ENCODE measurements at regions of chr7 and their contacts with region 1.

Region 1: GRCh38 chr7:130063036-130063435 is 7.3 kb upstream of the KLHDC10 start:
- DNase-seq: peak; percentile 49 to 79 (median 66)
- ATAC-seq: peak; percentile 84
- H3K4me3 ChIP-seq: no peak overlapping the region
- H3K4me3 Mint-ChIP-seq: no peak overlapping the region
- H3K27ac ChIP-seq: no peak overlapping the region
- H3K27ac Mint-ChIP-seq: no peak overlapping the region
- H3K4me1 ChIP-seq: no peaks in the 10 kb centered on the region
- H3K4me1 Mint-ChIP-seq: no peaks in the 10 kb centered on the region
- H3K27me3 ChIP-seq: peaks cover 0 to 2% of the 10 kb centered on the region in 2 experiments
- H3K27me3 Mint-ChIP-seq: peaks cover 7% of the 10 kb centered on the region
- CTCF ChIP-seq: peak; percentile 82

Region 2: DNA sequence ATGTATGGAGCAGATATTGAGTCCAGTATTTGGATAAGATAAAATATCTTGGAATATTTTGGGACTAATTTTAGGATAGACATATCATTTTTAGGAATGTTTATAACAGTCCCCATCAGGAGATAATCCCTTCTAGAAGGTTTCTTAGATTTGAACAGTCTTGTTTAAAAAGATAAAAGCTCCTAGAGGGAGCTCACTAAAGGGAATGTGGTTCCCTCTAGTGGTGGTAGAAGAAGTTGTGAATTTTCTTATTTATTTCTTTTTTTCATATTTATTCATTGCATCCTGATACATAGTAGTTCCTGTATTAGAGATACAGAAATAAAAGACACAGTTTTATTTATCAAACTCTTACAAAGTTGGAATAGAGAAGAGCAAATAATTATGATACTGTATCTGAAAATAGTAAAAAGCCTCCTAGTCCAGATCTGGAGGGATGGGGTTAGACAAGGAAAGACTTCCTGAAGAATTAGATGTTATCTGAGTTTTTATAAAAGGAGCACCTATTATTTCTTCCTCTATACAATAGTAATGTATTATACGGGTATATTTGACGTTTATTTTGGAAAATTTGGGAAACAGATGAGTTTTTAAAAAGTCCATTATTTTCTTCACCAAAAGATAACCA is 695.5 kb after region 1 on chr7:
- CTCF ChIA-PET with region 1: interaction called, 6 read pairs
- POLR2A ChIA-PET with region 1: no interaction called
- intact Hi-C with region 1: loop called in 1 of 2 experiments (anchors 2 kb)
- DNase-seq: peak in 2 of 9 experiments; percentile 57 to 71
- ATAC-seq: peak; percentile 56
- H3K4me3 ChIP-seq: no peak overlapping the region
- H3K4me3 Mint-ChIP-seq: no peak overlapping the region
- H3K27ac ChIP-seq: no peak overlapping the region
- H3K27ac Mint-ChIP-seq: no peak overlapping the region
- H3K4me1 ChIP-seq: no peaks in the 10 kb centered on the region
- H3K4me1 Mint-ChIP-seq: no peaks in the 10 kb centered on the region
- H3K27me3 ChIP-seq: no peaks in the 10 kb centered on the region
- H3K27me3 Mint-ChIP-seq: peaks cover 6% of the 10 kb centered on the region
- CTCF ChIP-seq: peak; percentile 84

Region 3: DNA sequence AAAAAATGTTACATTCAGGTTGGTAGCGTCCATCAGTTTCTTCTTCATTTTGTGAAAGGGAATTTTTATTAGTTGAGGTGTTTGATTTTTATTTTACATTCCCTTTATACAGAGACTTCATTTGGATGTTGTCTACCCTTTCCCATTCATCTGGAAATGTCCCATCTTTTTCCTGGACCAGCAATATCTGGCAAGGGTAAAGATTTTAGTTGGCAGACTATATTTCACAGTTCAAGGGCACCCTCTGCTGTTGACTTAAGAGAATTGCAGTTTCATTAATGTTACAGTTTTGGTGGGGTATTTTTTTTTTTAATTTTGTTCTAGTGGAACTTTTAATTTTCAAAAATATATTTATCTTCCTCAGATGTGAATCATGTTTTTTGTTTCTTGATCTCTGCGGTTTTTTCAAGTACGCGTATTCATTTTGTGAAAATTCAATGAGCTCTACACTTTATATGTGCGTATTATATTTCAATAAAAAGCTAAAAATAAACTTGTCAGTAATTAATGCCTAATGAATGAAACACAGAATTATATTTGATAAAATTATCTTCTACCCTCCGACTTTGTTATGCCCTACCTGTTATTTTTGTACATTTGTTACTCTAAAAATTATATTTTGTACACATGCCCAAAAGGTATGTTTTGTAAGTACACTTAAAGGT is 768.9 kb after region 1 on chr7:
- CTCF ChIA-PET with region 1: interaction called, 3 read pairs
- POLR2A ChIA-PET with region 1: no interaction called
- intact Hi-C with region 1: loop called (anchors 2 kb)
- DNase-seq: peak in 2 of 9 experiments; percentile 59 to 67
- ATAC-seq: peak; percentile 42
- H3K4me3 ChIP-seq: no peak overlapping the region
- H3K4me3 Mint-ChIP-seq: no peak overlapping the region
- H3K27ac ChIP-seq: no peak overlapping the region
- H3K27ac Mint-ChIP-seq: no peak overlapping the region
- H3K4me1 ChIP-seq: no peaks in the 10 kb centered on the region
- H3K4me1 Mint-ChIP-seq: no peaks in the 10 kb centered on the region
- H3K27me3 ChIP-seq: no peaks in the 10 kb centered on the region
- H3K27me3 Mint-ChIP-seq: no peaks in the 10 kb centered on the region
- CTCF ChIP-seq: peak; percentile 84

Measured in CD8-positive, alpha-beta T cell (primary cell).